ENCODE measurements at regions of chr6 and their contacts with region 1.

Region 1: DNA sequence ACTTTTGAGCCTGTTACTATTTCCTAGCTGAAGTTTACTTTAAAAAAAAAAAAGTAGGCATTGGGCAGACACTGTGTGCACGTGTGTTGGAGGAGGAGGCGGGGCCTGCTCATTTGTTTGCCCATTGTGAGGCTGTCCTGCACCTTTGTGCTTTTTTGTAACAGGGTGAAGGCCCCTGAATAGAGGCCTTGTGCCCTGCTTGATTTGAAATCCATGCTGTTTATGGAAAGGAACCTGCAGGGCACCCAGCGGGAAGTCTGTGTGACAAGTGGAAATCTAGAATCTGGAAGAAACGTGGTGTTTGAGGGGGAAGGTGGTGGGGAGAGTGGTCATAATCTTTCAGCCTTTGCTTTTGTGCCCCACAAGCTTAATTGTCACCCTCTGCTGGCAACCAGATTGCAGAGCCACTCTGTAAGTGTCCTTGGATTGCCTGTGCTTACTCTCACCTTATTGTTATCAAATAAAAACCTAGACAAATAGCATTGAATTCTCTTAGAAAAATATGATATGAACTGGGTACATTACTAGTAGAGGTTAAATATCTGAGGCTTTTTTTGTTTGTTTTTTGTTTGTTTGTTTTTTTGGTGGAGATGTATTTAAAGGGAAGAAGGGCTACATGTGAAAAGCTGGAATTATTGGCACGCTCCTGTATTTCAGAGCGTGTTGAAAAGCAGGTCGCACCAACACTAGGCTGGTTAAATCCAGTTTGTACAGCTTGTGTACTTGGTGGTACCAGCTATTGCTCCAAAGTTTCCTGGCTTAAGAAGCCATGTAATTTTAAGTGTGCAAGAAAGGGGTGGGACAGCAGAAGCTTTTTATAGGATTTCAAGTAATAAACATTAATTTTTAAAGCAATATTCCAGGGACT is 156.3 kb downstream of the ARID1B start:
- DNase-seq: no peak
- ATAC-seq: peak; percentile 66
- H3K4me3 ChIP-seq: no peak overlapping the region
- H3K27ac ChIP-seq: no peak overlapping the region
- H3K4me1 ChIP-seq: no peaks in the 10 kb centered on the region
- H3K27me3 ChIP-seq: no peaks in the 10 kb centered on the region
- CTCF ChIP-seq: peak in 2 of 3 experiments; percentile 3 to 36; a peak in 4 of 6 replicates
- EP300 ChIP-seq: no peak
- POLR2A ChIP-seq: no peak
- RAD21 ChIP-seq: peak; percentile 23; the same call in 1 of the 2 replicates

Region 2: GRCh38 chr6:156781861-156782631 is 151.4 kb before region 1 on chr6:
- CTCF ChIA-PET with region 1: interaction called, 6 read pairs
- POLR2A ChIA-PET with region 1: interaction called, 5 read pairs
- RAD21 ChIA-PET with region 1: interaction called, 4 read pairs
- SMC1A ChIA-PET with region 1: interaction called, 11 read pairs
- in situ Hi-C with region 1: no loop called
- intact Hi-C with region 1: no loop called
- DNase-seq: no peak
- ATAC-seq: no peak
- H3K4me3 ChIP-seq: peak overlapping the region; percentile 89
- H3K27ac ChIP-seq: peak overlapping the region; percentile 93
- H3K4me1 ChIP-seq: peaks cover 6% of the 10 kb centered on the region; the same call in 1 of the 2 replicates
- H3K27me3 ChIP-seq: no peaks in the 10 kb centered on the region
- CTCF ChIP-seq: no peak
- EP300 ChIP-seq: no peak
- POLR2A ChIP-seq: no peak
- RAD21 ChIP-seq: no peak

Region 3: DNA sequence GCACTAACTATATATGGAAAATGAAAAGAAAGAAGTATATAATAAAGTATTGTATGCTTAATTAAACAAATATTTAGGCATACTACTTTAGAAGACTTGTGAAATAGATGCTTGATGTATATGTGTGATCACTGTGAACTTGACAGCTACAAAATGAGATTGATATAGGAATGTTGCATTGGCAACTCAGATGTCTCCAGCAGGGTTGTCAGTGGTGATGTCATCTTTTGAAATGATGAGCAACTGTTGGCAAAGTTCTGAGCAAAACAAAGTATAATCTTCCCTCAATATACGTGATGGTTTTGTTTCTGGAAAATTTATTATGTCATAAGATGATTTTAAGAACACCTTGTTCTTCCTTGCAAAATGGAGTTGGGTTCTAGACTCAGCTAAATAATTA is 22.5 kb before region 1 on chr6:
- CTCF ChIA-PET with region 1: interaction called, 3 read pairs
- POLR2A ChIA-PET with region 1: interaction called, 11 read pairs
- RAD21 ChIA-PET with region 1: interaction called, 9 read pairs
- SMC1A ChIA-PET with region 1: interaction called, 12 read pairs
- in situ Hi-C with region 1: no loop called
- intact Hi-C with region 1: no loop called
- DNase-seq: no peak
- ATAC-seq: no peak
- H3K4me3 ChIP-seq: no peak overlapping the region
- H3K27ac ChIP-seq: no peak overlapping the region
- H3K4me1 ChIP-seq: 0 out of 2 replicates have a peak, but pooled peaks cover 3% of the 10 kb centered on the region
- H3K27me3 ChIP-seq: no peaks in the 10 kb centered on the region
- CTCF ChIP-seq: no peak
- EP300 ChIP-seq: no peak
- POLR2A ChIP-seq: no peak
- RAD21 ChIP-seq: no peak

Region 4: GRCh38 chr6:156917213-156917612 is 16.2 kb before region 1 on chr6:
- CTCF ChIA-PET with region 1: interaction called, 11 read pairs
- POLR2A ChIA-PET with region 1: interaction called, 11 read pairs
- RAD21 ChIA-PET with region 1: interaction called, 9 read pairs
- SMC1A ChIA-PET with region 1: interaction called, 42 read pairs
- in situ Hi-C with region 1: no loop called
- intact Hi-C with region 1: no loop called
- DNase-seq: no peak
- ATAC-seq: peak; percentile 81
- H3K4me3 ChIP-seq: no peak overlapping the region
- H3K27ac ChIP-seq: peak overlapping the region; percentile 75
- H3K4me1 ChIP-seq: peaks cover 29% of the 10 kb centered on the region
- H3K27me3 ChIP-seq: no peaks in the 10 kb centered on the region
- CTCF ChIP-seq: no peak
- EP300 ChIP-seq: no peak
- POLR2A ChIP-seq: no peak
- RAD21 ChIP-seq: no peak

Region 5: DNA sequence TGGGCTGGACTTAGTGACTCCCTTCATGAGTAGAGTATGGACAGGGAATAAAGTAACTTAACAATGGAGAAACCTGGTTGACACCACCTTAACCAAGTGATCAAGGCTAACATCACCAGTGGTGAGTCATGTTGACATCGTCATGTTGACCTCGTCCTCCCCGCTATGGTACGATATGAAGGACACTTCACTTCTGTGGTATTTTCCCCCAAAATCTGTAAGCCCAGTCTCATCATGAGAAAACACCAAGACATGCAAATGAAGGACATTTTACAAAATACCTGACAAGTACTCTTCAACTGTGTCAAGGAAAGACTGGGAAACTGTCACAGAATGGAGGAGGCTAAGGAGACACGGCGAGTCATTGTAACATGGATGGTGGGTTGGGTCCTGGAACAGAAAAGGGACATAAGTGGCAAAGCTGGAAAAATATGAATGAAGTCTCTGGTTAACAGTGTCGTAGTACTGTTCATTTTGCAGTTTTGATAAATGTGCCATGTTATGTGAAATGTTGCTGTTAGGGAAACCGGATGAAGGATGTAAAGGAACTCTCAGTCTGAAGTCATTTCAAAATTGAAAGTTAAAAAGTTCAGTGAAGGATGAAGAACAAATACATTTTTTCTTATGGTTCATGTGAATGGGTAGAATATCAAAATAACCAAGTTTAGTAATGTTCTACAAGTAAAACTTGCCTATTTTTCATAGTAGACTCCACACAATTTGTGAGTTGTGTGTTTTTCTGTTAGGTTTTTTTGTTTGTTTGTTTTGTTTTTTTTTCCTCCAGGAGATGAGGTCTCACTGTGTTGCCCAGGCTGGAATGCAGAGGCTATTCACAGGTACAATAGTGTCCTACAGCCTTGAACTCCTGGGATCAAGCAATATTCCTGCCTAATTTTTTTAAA is 142.4 kb after region 1 on chr6:
- CTCF ChIA-PET with region 1: no interaction called
- POLR2A ChIA-PET with region 1: no interaction called
- RAD21 ChIA-PET with region 1: no interaction called
- SMC1A ChIA-PET with region 1: no interaction called
- in situ Hi-C with region 1: no loop called
- intact Hi-C with region 1: no loop called
- DNase-seq: peak; percentile 44
- ATAC-seq: peak; percentile 92
- H3K4me3 ChIP-seq: peak overlapping the region; percentile 28; the same call in 1 of the 2 replicates
- H3K27ac ChIP-seq: peak overlapping the region; percentile 68
- H3K4me1 ChIP-seq: peaks cover 19% of the 10 kb centered on the region
- H3K27me3 ChIP-seq: no peaks in the 10 kb centered on the region
- CTCF ChIP-seq: no peak
- EP300 ChIP-seq: peak in 1 of 2 experiments; percentile 15; a peak in 1 of 4 replicates
- POLR2A ChIP-seq: no peak
- RAD21 ChIP-seq: no peak

Region 6: GRCh38 chr6:157227202-157228166 is 294.0 kb after region 1 on chr6:
- CTCF ChIA-PET with region 1: no interaction called
- POLR2A ChIA-PET with region 1: no interaction called
- RAD21 ChIA-PET with region 1: no interaction called
- SMC1A ChIA-PET with region 1: no interaction called
- in situ Hi-C with region 1: no loop called
- intact Hi-C with region 1: no loop called
- DNase-seq: no peak
- ATAC-seq: peak; percentile 32
- H3K4me3 ChIP-seq: no peak overlapping the region
- H3K27ac ChIP-seq: no peak overlapping the region
- H3K4me1 ChIP-seq: peaks cover 9% of the 10 kb centered on the region
- H3K27me3 ChIP-seq: peaks cover 3% of the 10 kb centered on the region in 2 experiments; a peak in 3 of 4 replicates
- CTCF ChIP-seq: peak; percentile 10 to 24 (median 13); a peak in 3 of 6 replicates
- EP300 ChIP-seq: no peak
- POLR2A ChIP-seq: no peak
- RAD21 ChIP-seq: no peak

Measured in GM12878 (cell line).